ENCODE measurements at regions of chr19 and their contacts with region 1.

Region 1: GRCh38 chr19:2950286-2951124 is 5.7 kb upstream of the ZNF77 start:
- DNase-seq: peak; percentile 98 to 99 (median 99)
- ATAC-seq: peak; percentile 95
- H3K4me3 ChIP-seq: peak overlapping the region; percentile 77
- H3K27ac ChIP-seq: peak overlapping the region; percentile 94
- H3K4me1 ChIP-seq: peaks cover 8 to 9% of the 10 kb centered on the region in 2 experiments
- H3K27me3 ChIP-seq: no peaks in the 10 kb centered on the region
- CTCF ChIP-seq: peak in 1 of 3 experiments; percentile 2; a peak in 1 of 6 replicates
- EP300 ChIP-seq: no peak
- POLR2A ChIP-seq: peak; percentile 99
- RAD21 ChIP-seq: 0 out of 4 replicates have a peak, but pooled peaks of 1 of the 2 experiments have one; percentile 4

Region 2: GRCh38 chr19:2398735-2399305 is 551.7 kb before region 1 on chr19:
- CTCF ChIA-PET with region 1: no interaction called
- POLR2A ChIA-PET with region 1: no interaction called
- in situ Hi-C with region 1: no loop called
- intact Hi-C with region 1: no loop called
- DNase-seq: no peak
- ATAC-seq: no peak
- H3K4me3 ChIP-seq: no peak overlapping the region
- H3K27ac ChIP-seq: no peak overlapping the region
- H3K4me1 ChIP-seq: peaks cover 0 to 29% of the 10 kb centered on the region in 2 experiments; a peak in 3 of 5 replicates
- H3K27me3 ChIP-seq: no peaks in the 10 kb centered on the region
- CTCF ChIP-seq: no peak
- EP300 ChIP-seq: peak; percentile 56; the same call in 1 of the 2 replicates
- POLR2A ChIP-seq: no peak
- RAD21 ChIP-seq: no peak

Region 3: DNA sequence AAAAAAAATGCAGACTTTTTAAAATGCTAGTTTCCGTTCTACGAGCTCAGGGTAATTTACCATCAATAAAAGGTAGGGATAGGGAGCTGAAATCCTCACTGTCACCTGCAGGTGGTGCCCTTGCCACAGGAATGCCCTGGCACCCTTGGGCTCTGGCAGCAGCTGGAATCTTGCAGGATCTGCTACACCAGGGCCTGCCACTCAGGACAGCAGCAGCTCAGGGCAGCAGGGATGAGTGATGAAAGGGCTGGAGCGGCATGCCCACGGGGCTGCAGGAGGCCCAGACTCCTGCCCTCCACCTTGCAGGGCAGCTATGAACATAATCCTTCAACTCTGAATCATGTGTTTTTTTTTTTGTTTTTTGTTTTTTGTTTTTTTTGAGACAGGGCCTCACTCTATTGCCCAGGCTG is 302.0 kb before region 1 on chr19:
- CTCF ChIA-PET with region 1: no interaction called
- POLR2A ChIA-PET with region 1: interaction called, 10 read pairs
- in situ Hi-C with region 1: no loop called
- intact Hi-C with region 1: no loop called
- DNase-seq: peak; percentile 78 to 84 (median 83)
- ATAC-seq: peak; percentile 95
- H3K4me3 ChIP-seq: no peak overlapping the region
- H3K27ac ChIP-seq: no peak overlapping the region
- H3K4me1 ChIP-seq: peaks cover 0 to 11% of the 10 kb centered on the region in 2 experiments; a peak in 2 of 5 replicates
- H3K27me3 ChIP-seq: peaks cover 21 to 51% of the 10 kb centered on the region in 2 experiments; a peak in 4 of 5 replicates
- CTCF ChIP-seq: peak; percentile 87 to 96 (median 91)
- EP300 ChIP-seq: no peak
- POLR2A ChIP-seq: no peak
- RAD21 ChIP-seq: peak; percentile 92 to 97

Region 4: GRCh38 chr19:2887391-2887914 is 63.1 kb before region 1 on chr19:
- CTCF ChIA-PET with region 1: interaction called, 3 read pairs
- POLR2A ChIA-PET with region 1: interaction called, 7 read pairs
- in situ Hi-C with region 1: no loop called
- intact Hi-C with region 1: loop called (anchors 1 kb)
- DNase-seq: peak; percentile 46 to 71 (median 52)
- ATAC-seq: peak; percentile 89
- H3K4me3 ChIP-seq: no peak overlapping the region
- H3K27ac ChIP-seq: no peak overlapping the region
- H3K4me1 ChIP-seq: peaks cover 5 to 8% of the 10 kb centered on the region in 2 experiments; a peak in 2 of 5 replicates
- H3K27me3 ChIP-seq: no peaks in the 10 kb centered on the region
- CTCF ChIP-seq: peak; percentile 62 to 82 (median 73)
- EP300 ChIP-seq: no peak
- POLR2A ChIP-seq: no peak
- RAD21 ChIP-seq: peak; percentile 39 to 65; a peak in 3 of 4 replicates

Region 5: GRCh38 chr19:2997720-2998119 is 47.2 kb after region 1 on chr19:
- CTCF ChIA-PET with region 1: no interaction called
- POLR2A ChIA-PET with region 1: no interaction called
- in situ Hi-C with region 1: no loop called
- intact Hi-C with region 1: no loop called
- DNase-seq: no peak
- ATAC-seq: no peak
- H3K4me3 ChIP-seq: no peak overlapping the region
- H3K27ac ChIP-seq: no peak overlapping the region
- H3K4me1 ChIP-seq: peaks cover 0 to 17% of the 10 kb centered on the region in 2 experiments; a peak in 3 of 5 replicates
- H3K27me3 ChIP-seq: no peaks in the 10 kb centered on the region; a peak in 1 of 5 replicates
- CTCF ChIP-seq: no peak
- EP300 ChIP-seq: no peak
- POLR2A ChIP-seq: no peak
- RAD21 ChIP-seq: no peak

Region 6: GRCh38 chr19:3035542-3036118 is 85.1 kb after region 1 on chr19:
- CTCF ChIA-PET with region 1: no interaction called
- POLR2A ChIA-PET with region 1: interaction called, 21 read pairs
- in situ Hi-C with region 1: no loop called
- intact Hi-C with region 1: no loop called
- DNase-seq: peak; percentile 99 to 100 (median 99)
- ATAC-seq: peak; percentile 92
- H3K4me3 ChIP-seq: peak overlapping the region; percentile 61
- H3K27ac ChIP-seq: peak overlapping the region; percentile 90
- H3K4me1 ChIP-seq: peaks cover 35 to 46% of the 10 kb centered on the region in 2 experiments
- H3K27me3 ChIP-seq: no peaks in the 10 kb centered on the region
- CTCF ChIP-seq: no peak; a peak in 1 of 6 replicates
- EP300 ChIP-seq: no peak
- POLR2A ChIP-seq: peak; percentile 83
- RAD21 ChIP-seq: no peak

Region 7: DNA sequence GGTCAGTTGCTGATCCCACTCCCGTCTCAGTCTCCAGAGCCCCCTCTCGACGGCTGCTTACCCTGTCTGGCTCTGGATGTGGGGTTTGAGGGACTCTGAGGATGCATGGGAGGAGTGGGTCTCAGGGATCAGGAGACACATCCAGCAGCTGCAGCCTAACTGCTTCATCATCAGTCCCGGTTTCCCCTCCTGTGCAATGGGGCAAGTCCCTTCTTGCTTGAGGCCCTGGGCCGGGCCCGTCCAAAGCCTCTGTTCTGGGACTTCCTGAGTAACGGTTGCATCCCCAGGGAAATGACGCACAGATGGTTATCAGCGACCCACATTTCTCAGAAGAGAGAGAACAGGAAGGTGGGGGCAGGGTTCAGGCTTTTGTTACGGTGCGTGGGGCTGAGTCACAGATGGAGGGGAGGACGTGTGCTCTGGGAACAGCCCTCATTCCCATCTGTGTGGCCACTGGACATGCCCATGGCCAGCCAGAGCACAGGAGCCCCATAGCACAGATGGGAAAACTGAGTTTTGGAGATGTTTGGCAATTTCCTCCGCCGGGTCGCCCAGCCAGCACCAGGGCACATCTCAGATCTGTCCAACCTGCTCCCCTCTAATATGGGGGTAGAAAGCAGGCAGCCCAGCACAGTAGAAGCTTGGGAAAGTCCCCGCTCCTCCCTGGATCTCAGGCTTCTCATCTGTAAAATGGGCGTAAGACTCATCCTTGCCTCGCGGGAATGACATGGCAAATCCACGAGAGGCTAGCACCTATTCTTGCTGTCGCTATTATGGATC is 204.6 kb after region 1 on chr19:
- CTCF ChIA-PET with region 1: no interaction called
- POLR2A ChIA-PET with region 1: no interaction called
- in situ Hi-C with region 1: loop called (anchors 5 kb)
- intact Hi-C with region 1: no loop called
- DNase-seq: peak; percentile 92 to 97 (median 93)
- ATAC-seq: peak; percentile 98
- H3K4me3 ChIP-seq: peak overlapping the region; percentile 43
- H3K27ac ChIP-seq: peak overlapping the region; percentile 88
- H3K4me1 ChIP-seq: peaks cover 10 to 30% of the 10 kb centered on the region in 2 experiments
- H3K27me3 ChIP-seq: no peaks in the 10 kb centered on the region
- CTCF ChIP-seq: no peak
- EP300 ChIP-seq: peak; percentile 99
- POLR2A ChIP-seq: peak; percentile 83
- RAD21 ChIP-seq: peak; percentile 3 to 30; a peak in 2 of 4 replicates

Region 8: DNA sequence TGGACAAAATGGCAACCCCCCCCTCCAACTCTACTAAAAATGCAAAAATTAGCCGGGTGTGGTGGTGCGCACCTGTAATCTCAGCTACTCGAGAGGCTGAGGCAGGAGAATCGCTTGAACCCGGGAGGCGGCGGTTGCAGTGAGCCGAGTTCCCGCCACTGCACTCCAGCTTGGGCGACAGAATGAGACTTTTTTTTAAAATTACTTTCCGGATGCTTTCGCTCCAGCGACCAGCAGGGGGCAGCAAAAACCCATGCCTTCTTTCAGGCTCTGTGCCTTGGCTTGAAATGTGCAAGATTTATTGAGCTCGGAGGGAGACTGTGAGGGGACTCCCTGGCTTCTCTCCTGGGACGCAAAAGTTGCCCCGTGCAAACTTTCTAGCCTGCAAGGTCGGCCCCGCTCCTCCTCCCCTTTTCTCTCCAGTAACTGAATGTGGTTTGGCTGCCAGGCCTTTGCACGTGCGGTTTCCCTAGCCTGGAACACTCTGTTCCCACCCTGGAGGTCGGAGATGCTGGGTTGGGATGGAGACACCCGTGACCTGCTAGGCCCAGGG is 354.4 kb after region 1 on chr19:
- CTCF ChIA-PET with region 1: no interaction called
- POLR2A ChIA-PET with region 1: interaction called, 3 read pairs
- in situ Hi-C with region 1: loop called (anchors 10 kb)
- intact Hi-C with region 1: no loop called
- DNase-seq: peak; percentile 52 to 85 (median 58)
- ATAC-seq: peak; percentile 40
- H3K4me3 ChIP-seq: no peak overlapping the region
- H3K27ac ChIP-seq: no peak overlapping the region
- H3K4me1 ChIP-seq: peaks cover 0 to 13% of the 10 kb centered on the region in 2 experiments; a peak in 3 of 5 replicates
- H3K27me3 ChIP-seq: peaks cover 0 to 18% of the 10 kb centered on the region in 2 experiments; a peak in 1 of 5 replicates
- CTCF ChIP-seq: peak; percentile 79 to 86 (median 82)
- EP300 ChIP-seq: no peak
- POLR2A ChIP-seq: no peak
- RAD21 ChIP-seq: peak; percentile 43 to 77

Measured in K562 (cell line).